Activated CD4-positive, alpha-beta memory T cell treated with anti-CD3 and anti-CD28 coated beads for 36 hours (primary cell): ENCODE measurements at regions of chr14 and their contacts with region 1.

Region 1: DNA sequence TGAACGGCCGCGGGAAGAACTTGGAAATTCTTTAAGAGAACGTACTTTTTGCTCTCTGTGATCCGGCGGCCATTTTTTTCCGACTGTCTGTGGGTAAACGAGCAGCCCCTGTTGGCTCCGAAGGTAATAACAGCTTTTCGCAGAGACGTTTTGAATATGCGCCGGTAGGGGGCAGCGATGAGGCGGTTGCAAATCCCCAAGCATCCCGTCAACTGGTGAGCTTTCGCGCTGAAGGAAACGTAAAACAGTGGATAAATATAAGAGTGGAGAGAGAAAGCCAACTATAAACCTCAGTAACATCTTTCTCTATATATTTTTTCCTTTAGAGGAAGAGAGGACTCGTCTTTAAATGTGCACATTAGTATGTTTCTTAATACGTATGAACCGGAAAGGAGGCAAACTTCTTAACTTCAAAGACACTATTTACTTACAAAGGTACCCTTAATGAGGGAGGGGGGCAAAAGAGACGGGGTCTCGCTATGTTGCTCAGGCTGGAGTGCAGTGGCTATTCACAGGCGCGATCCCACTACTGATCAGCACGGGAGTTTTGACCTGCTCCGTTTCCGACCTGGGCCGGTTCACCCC is 9.6 kb upstream of the NEMF start:
- DNase-seq: peak; percentile 93
- H3K4me3 Mint-ChIP-seq: no peak overlapping the region
- H3K27ac Mint-ChIP-seq: no peak overlapping the region
- H3K4me1 Mint-ChIP-seq: peaks cover 24% of the 10 kb centered on the region
- H3K27me3 Mint-ChIP-seq: peaks cover 2% of the 10 kb centered on the region

Region 2: DNA sequence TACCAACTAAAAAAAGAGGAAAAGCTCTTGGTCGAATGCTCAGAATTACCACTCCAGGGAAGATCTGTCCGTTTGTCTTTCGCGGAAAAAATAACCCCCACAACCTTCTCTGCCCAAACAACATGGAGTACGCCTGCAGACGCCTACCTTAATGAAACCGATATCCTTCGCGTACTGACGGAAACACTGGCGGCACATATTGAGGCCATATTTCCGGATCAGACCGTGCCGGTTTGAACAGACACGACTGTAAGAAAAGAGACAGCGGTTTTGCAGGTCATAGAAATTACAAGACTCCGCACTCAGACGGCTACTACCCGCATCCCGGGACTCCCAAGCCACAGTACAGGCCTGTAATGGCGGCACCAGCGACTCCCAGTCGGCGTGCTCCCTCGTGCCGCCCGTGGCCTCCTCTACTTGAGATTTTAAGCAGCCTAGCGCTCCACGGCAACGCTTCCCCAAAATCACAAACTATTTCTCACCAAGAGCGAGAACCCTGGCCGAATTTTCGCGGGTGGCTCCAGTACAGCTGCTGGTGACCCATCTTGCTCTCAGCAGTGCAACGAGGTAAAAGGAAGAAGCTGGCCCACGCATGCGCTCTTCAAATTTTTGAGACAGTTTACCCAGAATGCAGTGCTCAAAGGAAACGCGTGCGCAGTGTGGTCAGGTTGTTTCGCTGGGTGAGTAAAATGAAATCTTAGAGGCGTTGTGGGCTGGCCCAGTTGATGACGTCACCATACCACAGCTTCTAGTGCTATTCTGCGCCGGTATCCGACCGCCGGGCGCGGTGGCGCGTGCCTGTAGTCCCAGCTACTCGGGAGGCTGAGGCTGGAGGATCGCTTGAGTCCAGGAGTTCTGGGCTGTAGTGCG is 276.1 kb before region 1 on chr14 and contains the start of gene RPS29:
- CTCF ChIA-PET with region 1: interaction called, 7 read pairs
- POLR2A ChIA-PET with region 1: interaction called, 6 read pairs
- intact Hi-C with region 1: loop called (anchors 2 kb)
- DNase-seq: peak; percentile 99
- H3K4me3 Mint-ChIP-seq: peak within 1 kb of the TSS; percentile 87
- H3K27ac Mint-ChIP-seq: peak within 1 kb of the TSS; percentile 93
- H3K4me1 Mint-ChIP-seq: peaks cover 46% of the 10 kb centered on the region
- H3K27me3 Mint-ChIP-seq: peaks cover 4% of the 10 kb centered on the region
- total RNA-seq, gene RPS29: 2,029 to 2,157 TPM

Region 3: DNA sequence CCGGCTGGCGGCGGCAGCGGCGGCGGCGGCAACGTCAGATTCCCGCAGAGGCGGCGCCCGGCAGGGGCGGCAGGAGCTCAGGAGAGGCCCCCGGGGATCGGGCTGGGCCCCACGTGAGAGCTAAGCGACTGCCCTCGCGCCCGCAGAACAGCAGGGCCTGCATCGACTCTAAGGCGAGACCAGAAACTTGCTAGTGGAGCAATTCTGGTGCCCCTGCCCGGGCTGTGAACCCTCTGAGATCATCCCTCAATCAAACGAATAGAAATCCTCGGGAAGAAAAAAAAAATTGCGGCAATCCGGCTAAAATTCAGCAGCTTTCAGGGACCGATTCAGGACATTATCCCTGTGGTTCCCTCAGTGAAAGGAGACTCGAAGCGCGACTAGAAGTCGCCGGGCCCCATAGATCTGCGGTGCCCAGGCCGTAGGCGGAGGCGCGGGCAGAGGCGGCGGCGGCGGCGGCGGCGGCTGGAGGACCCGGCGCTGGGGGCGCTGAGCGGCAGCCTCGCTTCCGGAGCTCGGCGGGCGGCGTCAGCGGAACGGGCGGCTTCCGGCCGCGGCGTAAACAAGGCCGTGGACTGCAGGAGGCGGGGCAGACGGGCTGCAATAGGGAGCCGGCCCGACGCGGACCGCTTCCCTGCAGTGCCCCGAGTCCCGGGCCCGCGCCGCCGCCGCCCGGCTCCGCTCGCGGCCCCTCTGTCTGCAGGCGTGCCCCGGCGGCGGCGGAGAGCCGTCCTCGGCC is 94.5 kb before region 1 on chr14 and contains the start of gene KLHDC2:
- CTCF ChIA-PET with region 1: interaction called, 16 read pairs
- POLR2A ChIA-PET with region 1: interaction called, 14 read pairs
- intact Hi-C with region 1: no loop called
- DNase-seq: peak; percentile 94
- H3K4me3 Mint-ChIP-seq: peak within 1 kb of the TSS; percentile 88
- H3K27ac Mint-ChIP-seq: peak within 1 kb of the TSS; percentile 100
- H3K4me1 Mint-ChIP-seq: peaks cover 28% of the 10 kb centered on the region
- H3K27me3 Mint-ChIP-seq: no peaks in the 10 kb centered on the region
- total RNA-seq, gene KLHDC2: 27.8 to 28.2 TPM

Region 4: DNA sequence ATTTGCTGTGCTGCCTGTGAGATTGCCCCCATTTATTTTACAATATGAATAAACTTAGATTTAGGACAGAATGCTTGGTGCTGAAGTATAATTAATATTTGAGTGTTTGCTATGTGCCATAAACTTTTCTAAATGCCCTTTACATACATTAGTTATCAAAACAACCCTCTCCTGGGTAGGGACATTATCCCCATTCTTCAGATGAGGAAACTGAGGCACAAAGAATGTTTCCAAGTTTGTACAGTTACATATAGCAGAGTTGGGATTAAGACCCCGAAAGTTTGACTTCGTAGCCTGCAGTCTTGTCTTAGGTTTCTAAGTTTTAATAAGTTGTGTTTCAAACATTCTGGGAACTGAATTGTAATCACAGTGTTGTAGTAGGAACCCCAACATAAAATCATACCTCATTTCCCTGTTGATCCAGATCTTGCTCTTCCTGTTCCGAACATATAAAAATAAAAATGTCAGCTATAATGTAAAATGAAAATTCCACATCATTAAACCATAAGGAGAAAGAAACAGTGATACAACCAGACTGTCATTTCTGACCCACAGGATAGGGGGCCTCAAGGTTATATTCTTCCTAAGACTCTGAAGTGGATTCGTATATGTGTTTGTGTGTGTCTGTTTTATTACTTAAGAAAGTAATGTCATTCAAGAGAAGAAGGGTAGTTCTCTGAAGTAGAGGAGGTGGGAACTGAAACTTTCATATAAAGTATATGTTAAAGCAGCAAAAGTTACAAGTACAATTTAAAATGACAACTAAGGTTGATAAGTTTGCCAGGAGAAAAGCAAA is 75.7 kb before region 1 on chr14:
- CTCF ChIA-PET with region 1: no interaction called
- POLR2A ChIA-PET with region 1: no interaction called
- intact Hi-C with region 1: no loop called
- DNase-seq: no peak
- H3K4me3 Mint-ChIP-seq: no peak overlapping the region
- H3K27ac Mint-ChIP-seq: peak overlapping the region; percentile 5
- H3K4me1 Mint-ChIP-seq: no peaks in the 10 kb centered on the region
- H3K27me3 Mint-ChIP-seq: no peaks in the 10 kb centered on the region

Region 5: GRCh38 chr14:49920935-49921334 is 58.8 kb after region 1 on chr14:
- CTCF ChIA-PET with region 1: no interaction called
- POLR2A ChIA-PET with region 1: no interaction called
- intact Hi-C with region 1: no loop called
- DNase-seq: no peak
- H3K4me3 Mint-ChIP-seq: no peak overlapping the region
- H3K27ac Mint-ChIP-seq: no peak overlapping the region
- H3K4me1 Mint-ChIP-seq: peaks cover 17% of the 10 kb centered on the region
- H3K27me3 Mint-ChIP-seq: no peaks in the 10 kb centered on the region

Region 6: DNA sequence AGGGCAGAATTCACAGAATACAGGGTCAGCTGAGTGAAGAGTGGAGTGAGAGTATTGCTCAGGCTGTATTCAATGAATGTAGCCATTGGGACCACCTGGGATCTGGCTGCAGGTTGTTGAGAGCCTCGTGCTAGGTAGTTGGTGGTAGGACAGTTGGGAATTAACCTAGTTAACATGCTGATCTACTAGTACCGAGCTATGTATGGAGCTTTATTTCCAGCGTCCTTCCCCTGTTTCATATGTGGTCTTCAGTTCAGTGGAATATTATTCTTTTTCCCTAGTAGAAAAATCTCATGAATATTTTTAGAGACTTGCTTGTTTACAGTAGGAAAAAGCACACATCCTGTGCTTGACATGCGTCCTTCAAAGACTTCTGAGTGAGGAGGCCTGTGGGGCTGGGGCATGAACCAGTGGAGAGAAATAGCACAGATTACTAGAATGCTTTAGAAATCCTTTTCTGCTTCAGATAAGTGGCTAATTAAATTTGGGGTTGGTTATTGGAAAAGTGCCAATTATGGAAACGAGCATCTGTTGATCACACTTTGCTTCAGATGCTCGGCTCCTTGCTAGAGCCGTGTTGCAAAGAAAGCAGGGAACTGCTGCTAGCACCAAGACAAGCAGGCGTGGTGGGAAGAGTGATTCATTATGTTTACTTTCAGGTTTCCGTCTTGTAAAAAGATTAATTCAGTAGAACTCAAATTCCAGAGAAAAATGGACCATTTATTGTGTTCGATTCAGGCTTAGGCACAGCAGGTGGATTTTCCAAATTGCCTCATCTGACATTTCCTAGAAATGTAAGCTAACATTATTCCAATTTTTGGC is 84.3 kb after region 1 on chr14:
- CTCF ChIA-PET with region 1: interaction called, 11 read pairs
- POLR2A ChIA-PET with region 1: no interaction called
- intact Hi-C with region 1: no loop called
- DNase-seq: peak; percentile 51
- H3K4me3 Mint-ChIP-seq: peak overlapping the region; percentile 24
- H3K27ac Mint-ChIP-seq: peak overlapping the region; percentile 83
- H3K4me1 Mint-ChIP-seq: peaks cover 72% of the 10 kb centered on the region
- H3K27me3 Mint-ChIP-seq: no peaks in the 10 kb centered on the region

Region 7: GRCh38 chr14:50045039-50045711 is 183.0 kb after region 1 on chr14:
- CTCF ChIA-PET with region 1: interaction called, 14 read pairs
- POLR2A ChIA-PET with region 1: interaction called, 9 read pairs
- intact Hi-C with region 1: no loop called
- DNase-seq: peak; percentile 90
- H3K4me3 Mint-ChIP-seq: peak overlapping the region; percentile 0
- H3K27ac Mint-ChIP-seq: peak overlapping the region; percentile 87
- H3K4me1 Mint-ChIP-seq: peaks cover 59% of the 10 kb centered on the region
- H3K27me3 Mint-ChIP-seq: no peaks in the 10 kb centered on the region

Region 8: DNA sequence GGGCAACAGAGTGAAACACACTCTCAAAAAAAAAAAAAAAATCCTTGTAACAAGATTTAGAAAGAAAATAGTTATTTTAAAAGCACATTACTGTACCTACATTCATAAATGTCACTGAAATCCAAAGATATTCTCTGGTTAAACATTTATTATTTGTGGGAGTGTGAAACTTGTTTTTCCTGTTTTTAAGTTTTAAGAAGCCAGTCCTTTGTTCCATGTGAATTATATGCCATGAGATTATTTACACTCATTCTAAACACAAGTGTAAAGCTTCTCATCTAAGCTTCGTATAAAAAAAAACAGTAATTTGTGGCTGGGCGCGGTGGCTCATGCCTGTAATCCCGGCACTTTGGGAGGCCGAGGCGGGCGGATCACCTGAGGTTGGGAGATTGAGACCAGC is 239.2 kb after region 1 on chr14:
- CTCF ChIA-PET with region 1: interaction called, 32 read pairs
- POLR2A ChIA-PET with region 1: interaction called, 6 read pairs
- intact Hi-C with region 1: loop called (anchors 1 kb)
- DNase-seq: no peak
- H3K4me3 Mint-ChIP-seq: no peak overlapping the region
- H3K27ac Mint-ChIP-seq: no peak overlapping the region
- H3K4me1 Mint-ChIP-seq: peaks cover 48% of the 10 kb centered on the region
- H3K27me3 Mint-ChIP-seq: no peaks in the 10 kb centered on the region

Region 9: DNA sequence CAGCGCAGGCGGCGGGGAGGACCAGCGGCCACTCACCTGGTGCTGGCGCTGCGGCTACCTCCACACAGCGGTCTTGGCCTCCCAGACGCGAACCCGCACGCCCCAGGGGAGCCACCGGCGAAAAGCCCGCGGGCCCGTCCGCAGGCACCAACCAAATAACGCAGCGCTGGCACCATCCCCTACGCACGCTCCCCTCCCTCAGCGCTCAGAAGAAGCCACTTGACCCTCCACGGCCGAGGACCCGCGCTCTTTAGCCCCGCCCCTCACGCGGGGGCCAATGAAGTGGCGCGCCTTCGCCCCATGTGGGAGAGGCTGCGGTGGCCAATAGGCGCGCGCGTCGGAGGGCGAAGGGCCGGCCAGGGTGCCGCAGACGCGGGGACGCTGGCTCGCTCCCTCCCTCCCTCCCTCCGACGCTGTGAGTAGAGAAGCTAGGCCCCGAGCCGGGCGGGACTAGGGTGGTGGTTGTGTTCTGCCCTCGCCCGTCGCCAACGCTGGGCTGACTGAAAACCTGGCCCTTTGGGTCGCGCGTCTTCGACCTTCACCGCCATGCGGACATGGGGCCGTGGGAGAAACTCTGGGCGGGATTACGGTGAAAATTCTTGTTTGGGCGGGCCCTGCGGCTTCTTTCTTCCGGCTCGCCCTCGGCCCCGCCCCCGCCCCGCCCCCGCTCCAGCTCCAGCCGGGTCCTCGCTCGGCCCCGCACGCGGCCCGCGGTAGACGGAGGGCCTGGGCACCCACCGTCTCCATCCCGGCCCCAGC is 450.0 kb after region 1 on chr14 and contains the starts of genes DMAC2L and L2HGDH:
- CTCF ChIA-PET with region 1: no interaction called
- POLR2A ChIA-PET with region 1: no interaction called
- intact Hi-C with region 1: loop called (anchors 2 kb)
- DNase-seq: peak; percentile 93
- H3K4me3 Mint-ChIP-seq: peak within 1 kb of the TSS; percentile 96
- H3K27ac Mint-ChIP-seq: peak within 1 kb of the TSS; percentile 94
- H3K4me1 Mint-ChIP-seq: peaks cover 37% of the 10 kb centered on the region
- H3K27me3 Mint-ChIP-seq: no peaks in the 10 kb centered on the region
- total RNA-seq, gene DMAC2L: 13.4 to 13.9 TPM
- total RNA-seq, gene L2HGDH: 15.0 to 15.2 TPM